Endothelial cell of umbilical vein (primary cell): ENCODE measurements at regions of chr13 and their contacts with region 1.

Region 1: DNA sequence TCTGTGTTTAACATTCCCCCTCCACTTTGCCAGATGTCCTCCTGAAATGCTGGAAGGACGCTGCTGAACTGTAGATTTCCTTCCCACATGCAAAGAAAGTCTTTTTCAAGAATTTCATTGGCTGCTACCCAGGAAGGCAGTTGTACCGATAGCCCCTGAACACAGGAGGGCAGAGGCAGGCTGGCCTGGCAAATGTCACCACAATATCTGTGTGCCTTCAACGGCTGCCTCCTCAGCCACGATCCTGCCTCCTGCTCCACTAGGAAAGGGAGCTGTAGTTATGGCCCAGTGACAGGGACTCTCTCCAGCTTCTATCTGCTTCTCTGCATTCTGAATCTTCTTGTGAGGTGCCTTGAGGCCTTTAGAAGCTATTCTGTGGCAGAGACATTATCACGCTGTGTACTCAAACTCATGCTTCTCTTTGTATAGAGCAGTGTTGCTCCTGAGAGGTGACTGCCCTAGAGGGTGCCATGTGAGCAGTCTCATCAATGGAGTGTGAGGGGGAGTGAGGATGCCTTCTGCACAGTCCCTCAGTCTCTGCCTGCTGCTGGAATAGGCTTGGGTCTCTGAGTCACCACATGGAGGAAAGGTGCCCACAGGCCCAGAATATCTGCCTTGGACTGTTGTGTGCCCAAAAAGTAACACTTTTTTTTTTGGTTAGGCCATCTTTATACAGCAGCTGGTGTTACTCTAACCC is 279.8 kb downstream of the DNAJC15 start:
- DNase-seq: peak; percentile 73
- H3K4me3 ChIP-seq: no peak overlapping the region
- H3K27ac ChIP-seq: no peak overlapping the region
- H3K4me1 ChIP-seq: peaks cover 57% of the 10 kb centered on the region
- H3K27me3 ChIP-seq: no peaks in the 10 kb centered on the region
- CTCF ChIP-seq: peak; percentile 64 to 70
- POLR2A ChIP-seq: no peak

Region 2: GRCh38 chr13:42969558-42970172 is 333.5 kb before region 1 on chr13:
- CTCF ChIA-PET with region 1: no interaction called
- POLR2A ChIA-PET with region 1: no interaction called
- dilution Hi-C with region 1: no loop called
- intact Hi-C with region 1: loop called (anchors 10 kb)
- DNase-seq: peak; percentile 62
- H3K4me3 ChIP-seq: no peak overlapping the region
- H3K27ac ChIP-seq: no peak overlapping the region
- H3K4me1 ChIP-seq: no peaks in the 10 kb centered on the region
- H3K27me3 ChIP-seq: no peaks in the 10 kb centered on the region
- CTCF ChIP-seq: peak; percentile 78 to 80
- POLR2A ChIP-seq: no peak

Region 3: GRCh38 chr13:43085545-43085944 is 217.6 kb before region 1 on chr13:
- CTCF ChIA-PET with region 1: interaction called, 4 read pairs
- POLR2A ChIA-PET with region 1: no interaction called
- dilution Hi-C with region 1: no loop called
- intact Hi-C with region 1: loop called (anchors 5 kb)
- DNase-seq: peak; percentile 59
- H3K4me3 ChIP-seq: no peak overlapping the region
- H3K27ac ChIP-seq: no peak overlapping the region
- H3K4me1 ChIP-seq: peaks cover 3% of the 10 kb centered on the region
- H3K27me3 ChIP-seq: no peaks in the 10 kb centered on the region
- CTCF ChIP-seq: peak in 1 of 2 donors; percentile 35
- POLR2A ChIP-seq: no peak

Region 4: GRCh38 chr13:43269037-43269481 is 34.1 kb before region 1 on chr13:
- CTCF ChIA-PET with region 1: interaction called, 9 read pairs
- POLR2A ChIA-PET with region 1: no interaction called
- dilution Hi-C with region 1: no loop called
- intact Hi-C with region 1: loop called (anchors 1 kb)
- DNase-seq: peak; percentile 87
- H3K4me3 ChIP-seq: no peak overlapping the region
- H3K27ac ChIP-seq: peak overlapping the region; percentile 70
- H3K4me1 ChIP-seq: peaks cover 19% of the 10 kb centered on the region
- H3K27me3 ChIP-seq: no peaks in the 10 kb centered on the region
- CTCF ChIP-seq: no peak
- POLR2A ChIP-seq: no peak

Region 5: GRCh38 chr13:43368003-43368402 is 64.8 kb after region 1 on chr13:
- CTCF ChIA-PET with region 1: interaction called, 3 read pairs
- POLR2A ChIA-PET with region 1: no interaction called
- dilution Hi-C with region 1: no loop called
- intact Hi-C with region 1: loop called (anchors 2 kb)
- DNase-seq: peak; percentile 37
- H3K4me3 ChIP-seq: no peak overlapping the region
- H3K27ac ChIP-seq: no peak overlapping the region
- H3K4me1 ChIP-seq: peaks cover 21% of the 10 kb centered on the region
- H3K27me3 ChIP-seq: no peaks in the 10 kb centered on the region
- CTCF ChIP-seq: no peak
- POLR2A ChIP-seq: no peak

Region 6: DNA sequence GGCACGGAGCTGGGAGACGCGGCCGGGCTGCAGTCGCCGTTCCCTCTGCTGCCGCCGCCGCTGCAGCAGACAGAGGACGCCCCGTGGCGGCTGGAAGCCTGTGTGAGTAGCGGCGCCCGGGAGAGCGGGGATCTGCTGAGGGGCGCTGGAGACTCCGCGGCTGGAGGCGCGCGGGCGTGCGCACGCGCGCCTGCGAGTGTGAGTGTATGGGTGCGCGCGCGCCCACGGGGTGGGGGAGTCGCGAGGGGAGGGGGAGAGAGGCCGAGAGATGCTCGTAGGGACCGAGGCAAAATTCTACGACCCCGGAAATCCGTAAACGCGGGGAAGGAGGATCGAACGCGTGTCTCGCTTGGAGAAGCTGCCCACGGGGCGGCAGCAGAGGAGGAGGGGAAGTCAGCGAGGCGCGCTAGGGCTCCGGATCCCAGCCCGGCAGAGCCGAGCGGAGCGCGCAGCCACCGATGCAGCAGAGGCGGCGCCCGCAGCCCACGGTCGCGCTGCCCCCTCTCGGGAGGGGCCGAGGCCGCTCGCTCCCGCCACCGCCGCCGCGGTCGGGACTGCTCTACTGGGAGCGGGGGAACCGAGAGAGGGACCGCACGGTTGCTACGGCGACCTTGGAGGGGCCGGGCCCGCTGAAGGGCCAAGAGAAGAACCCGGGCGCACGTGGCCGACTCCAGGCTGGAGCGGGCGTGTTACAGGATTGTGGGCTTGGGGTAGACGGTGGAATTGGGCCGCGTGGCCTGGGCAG is 483.8 kb after region 1 on chr13 and contains the start of gene ENOX1:
- CTCF ChIA-PET with region 1: no interaction called
- POLR2A ChIA-PET with region 1: no interaction called
- dilution Hi-C with region 1: no loop called
- intact Hi-C with region 1: loop called (anchors 1 kb)
- DNase-seq: peak; percentile 45
- H3K4me3 ChIP-seq: peak within 1 kb of the TSS; percentile 47 to 51 (median 48)
- H3K27ac ChIP-seq: no peak within 1 kb of the TSS
- H3K4me1 ChIP-seq: peaks cover 18% of the 10 kb centered on the region
- H3K27me3 ChIP-seq: peaks cover 0 to 2% of the 10 kb centered on the region in 2 experiments
- CTCF ChIP-seq: peak in 1 of 2 donors; percentile 8
- POLR2A ChIP-seq: no peak
- total RNA-seq, gene ENOX1: 0.28 and 0.97 TPM in 2 replicates

Region 7: DNA sequence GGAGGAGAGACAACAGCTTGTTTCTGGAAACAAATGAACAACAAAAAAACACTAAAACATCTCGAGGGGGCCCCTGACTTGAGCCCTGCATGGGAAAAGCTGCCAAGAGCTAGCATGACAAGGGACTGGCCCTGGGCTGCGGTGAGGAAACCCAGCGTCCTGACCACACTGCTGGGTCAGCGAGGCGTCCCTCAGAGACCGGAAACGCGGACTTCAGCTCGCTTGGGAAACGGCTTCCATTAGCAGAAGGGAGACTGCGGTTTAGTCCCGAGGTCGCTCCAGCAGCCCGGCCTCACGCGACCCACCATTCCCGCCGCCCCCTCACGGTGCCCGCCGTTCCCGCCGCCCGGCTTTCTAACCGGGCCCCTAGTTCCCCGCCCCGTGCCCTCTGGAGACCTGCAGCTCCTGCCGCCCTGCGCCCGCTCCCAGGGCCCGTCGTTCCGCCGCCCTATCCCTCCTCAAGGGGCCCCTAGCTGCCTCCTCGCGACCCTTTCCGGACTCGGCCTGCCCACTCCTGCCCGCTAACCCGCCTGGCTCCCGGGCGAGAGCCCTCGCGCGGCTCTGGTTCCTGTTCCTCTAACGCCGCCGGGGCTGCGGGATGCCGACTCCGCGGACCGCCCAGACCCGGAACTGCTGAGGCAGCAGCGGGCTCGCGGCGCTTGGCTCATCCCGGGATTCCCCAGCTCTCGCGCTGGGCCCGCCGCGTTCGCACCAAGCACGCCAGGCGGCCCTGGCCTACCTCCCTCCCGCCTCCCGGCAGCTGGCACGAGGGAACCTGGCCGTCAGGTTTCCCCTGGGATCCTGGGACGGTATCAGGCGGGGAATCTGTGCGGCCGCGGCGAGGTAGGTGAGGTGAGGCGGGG is 575.9 kb after region 1 on chr13 and contains the start of gene CCDC122:
- CTCF ChIA-PET with region 1: no interaction called
- POLR2A ChIA-PET with region 1: no interaction called
- dilution Hi-C with region 1: no loop called
- intact Hi-C with region 1: loop called (anchors 1 kb)
- DNase-seq: peak; percentile 79
- H3K4me3 ChIP-seq: peak within 1 kb of the TSS; percentile 71 to 92 (median 76)
- H3K27ac ChIP-seq: peak within 1 kb of the TSS; percentile 90
- H3K4me1 ChIP-seq: peaks cover 11% of the 10 kb centered on the region
- H3K27me3 ChIP-seq: no peaks in the 10 kb centered on the region
- CTCF ChIP-seq: no peak
- POLR2A ChIP-seq: peak; percentile 74
- total RNA-seq, gene CCDC122: 5.1 and 7.5 TPM in 2 replicates